Panc1 (cell line): ENCODE measurements at regions of chr2 and their contacts with region 1.

Region 1: GRCh38 chr2:189287982-189288521 is 108.5 kb upstream of the COL5A2 start:
- DNase-seq: peak; percentile 75
- ATAC-seq: peak; percentile 91
- H3K4me3 ChIP-seq: no peak overlapping the region
- H3K27ac ChIP-seq: peak overlapping the region; percentile 13
- H3K4me1 ChIP-seq: peaks cover 12% of the 10 kb centered on the region
- H3K27me3 ChIP-seq: no peaks in the 10 kb centered on the region
- CTCF ChIP-seq: peak; percentile 61; the same call in 1 of the 2 replicates

Region 2: DNA sequence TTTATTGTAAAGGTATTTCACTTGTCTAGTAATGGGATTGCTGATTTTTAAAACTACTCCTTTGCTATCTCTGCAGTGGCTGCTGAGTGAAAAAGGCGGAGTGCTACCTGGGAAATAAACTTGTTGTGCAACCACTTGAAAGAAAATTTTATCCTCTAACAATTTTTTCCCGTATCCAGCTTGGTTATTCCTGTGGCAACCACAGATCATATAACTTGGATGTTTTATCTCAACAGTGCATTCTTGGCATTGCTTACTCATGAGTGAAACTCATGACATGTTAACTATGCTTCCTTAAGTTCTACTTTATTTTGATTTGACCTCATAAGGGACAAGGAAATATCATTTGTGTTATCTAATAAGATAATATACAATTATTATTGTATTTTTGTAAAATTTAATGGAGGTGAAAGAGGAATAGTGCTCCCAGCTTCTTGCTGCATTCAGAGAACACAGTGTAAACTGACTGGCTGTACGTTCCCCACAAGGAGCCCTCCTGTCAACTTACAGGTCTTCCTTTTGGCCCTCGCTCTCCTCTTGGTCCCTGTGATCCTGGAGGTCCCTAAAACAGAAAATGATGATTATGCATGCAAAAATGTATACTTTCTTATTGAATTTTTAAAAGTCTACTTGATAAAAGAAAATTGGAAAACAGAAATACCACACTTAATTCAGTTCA is 191.1 kb before region 1 on chr2:
- CTCF ChIA-PET with region 1: no interaction called
- POLR2A ChIA-PET with region 1: no interaction called
- in situ Hi-C with region 1: no loop called
- intact Hi-C with region 1: loop called (anchors 2 kb)
- DNase-seq: peak; percentile 22
- ATAC-seq: peak; percentile 87
- H3K4me3 ChIP-seq: no peak overlapping the region
- H3K27ac ChIP-seq: peak overlapping the region; percentile 66
- H3K4me1 ChIP-seq: peaks cover 19% of the 10 kb centered on the region; the same call in 1 of the 2 replicates
- H3K27me3 ChIP-seq: no peaks in the 10 kb centered on the region
- CTCF ChIP-seq: no peak

Region 3: DNA sequence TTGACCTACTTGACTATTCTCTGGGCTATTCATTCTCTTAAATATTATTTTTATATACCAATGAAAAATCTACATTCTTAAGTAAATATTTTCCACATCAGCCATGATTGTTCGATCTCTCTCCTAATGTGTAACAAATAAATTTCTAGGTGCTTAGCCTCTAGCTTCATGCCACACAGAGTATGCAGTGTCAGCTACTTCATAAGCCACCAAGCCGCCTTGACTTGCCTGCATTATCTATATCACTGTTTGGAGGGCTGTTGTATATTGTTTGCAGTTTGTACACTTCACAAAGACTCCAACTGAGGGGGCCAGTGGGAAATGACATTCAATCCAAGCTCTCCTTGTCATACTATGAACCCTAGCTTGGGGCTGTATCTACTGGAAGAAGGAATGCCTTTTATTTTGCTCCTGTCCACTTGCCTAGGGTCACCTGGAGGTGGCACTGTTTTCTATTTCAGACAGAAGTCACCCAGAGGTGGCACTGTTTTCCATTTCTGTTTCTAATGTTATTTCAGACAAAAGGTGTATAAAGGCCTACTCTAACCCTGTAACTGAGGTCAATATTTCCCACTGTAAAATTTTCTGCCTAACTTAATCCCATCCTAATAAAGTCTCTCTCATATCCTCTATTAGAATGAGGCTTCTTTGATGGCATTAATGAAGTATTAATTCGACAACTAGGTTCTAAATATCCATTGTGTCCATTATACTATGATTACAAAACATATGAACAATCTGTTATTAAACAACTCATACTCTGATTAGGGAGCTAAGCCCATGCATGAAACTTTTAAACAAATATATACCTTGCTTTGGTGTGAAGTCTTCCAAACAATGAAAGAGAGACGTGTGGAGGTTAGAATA is 144.9 kb before region 1 on chr2:
- CTCF ChIA-PET with region 1: interaction called, 4 read pairs
- POLR2A ChIA-PET with region 1: no interaction called
- in situ Hi-C with region 1: no loop called
- intact Hi-C with region 1: loop called (anchors 1 kb)
- DNase-seq: peak; percentile 58
- ATAC-seq: peak; percentile 88
- H3K4me3 ChIP-seq: no peak overlapping the region
- H3K27ac ChIP-seq: peak overlapping the region; percentile 79
- H3K4me1 ChIP-seq: peaks cover 32% of the 10 kb centered on the region
- H3K27me3 ChIP-seq: no peaks in the 10 kb centered on the region
- CTCF ChIP-seq: peak; percentile 87

Region 4: DNA sequence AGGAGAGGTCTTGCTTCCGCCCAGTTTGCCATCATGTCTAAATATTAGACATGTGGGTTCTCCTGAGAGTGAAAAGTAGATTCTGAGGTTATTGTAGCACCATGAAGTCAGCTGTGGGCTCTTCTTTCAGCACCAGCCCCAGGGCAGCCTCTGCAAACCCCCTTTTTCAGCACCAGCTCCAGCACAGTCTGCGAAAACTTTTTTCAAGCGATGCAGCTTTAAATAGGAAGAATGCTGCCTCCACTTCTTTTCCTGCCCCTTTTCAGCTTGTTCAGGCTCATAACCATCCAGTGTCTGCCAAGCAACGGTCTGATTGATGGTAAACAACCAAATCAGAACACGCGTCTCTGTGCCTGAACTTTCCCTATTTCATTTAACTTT is 108.5 kb before region 1 on chr2 and contains the start of gene COL5A2:
- CTCF ChIA-PET with region 1: interaction called, 4 read pairs
- POLR2A ChIA-PET with region 1: no interaction called
- in situ Hi-C with region 1: no loop called
- intact Hi-C with region 1: loop called (anchors 1 kb)
- DNase-seq: no peak
- ATAC-seq: peak; percentile 91
- H3K4me3 ChIP-seq: peak within 1 kb of the TSS; percentile 64 to 95
- H3K27ac ChIP-seq: peak within 1 kb of the TSS; percentile 84
- H3K4me1 ChIP-seq: peaks cover 18% of the 10 kb centered on the region
- H3K27me3 ChIP-seq: no peaks in the 10 kb centered on the region
- CTCF ChIP-seq: no peak
- total RNA-seq, gene COL5A2: 144 TPM

Region 5: DNA sequence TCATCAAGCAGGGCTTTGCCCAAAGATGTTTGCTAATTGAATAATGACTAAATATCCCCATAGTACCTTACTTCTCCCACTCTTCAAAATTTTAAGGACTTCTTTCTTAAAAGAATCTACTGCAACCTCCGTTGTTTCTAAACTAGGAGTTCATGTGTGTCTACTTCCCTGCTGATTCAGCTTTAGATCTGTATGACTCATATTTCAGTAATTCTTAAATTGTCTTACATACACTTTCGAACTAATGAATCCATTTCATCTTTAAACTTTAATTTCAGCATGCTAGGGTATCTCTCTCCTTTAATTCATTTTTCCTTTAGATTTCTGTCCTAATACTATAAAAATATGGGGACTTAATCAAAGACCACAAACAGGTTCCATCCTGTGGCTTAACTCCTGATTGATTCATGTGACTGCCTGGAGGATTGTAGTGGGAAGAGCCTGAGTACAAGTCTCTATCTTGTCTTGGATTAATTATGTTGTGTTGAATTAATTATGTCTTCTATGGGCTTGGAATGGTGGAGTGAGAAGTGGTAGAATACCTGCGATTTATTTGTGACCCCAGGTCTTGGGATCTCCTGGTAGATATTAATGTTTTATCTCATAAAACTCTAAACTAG is 83.6 kb before region 1 on chr2:
- CTCF ChIA-PET with region 1: no interaction called
- POLR2A ChIA-PET with region 1: interaction called, 5 read pairs
- in situ Hi-C with region 1: no loop called
- intact Hi-C with region 1: loop called (anchors 10 kb)
- DNase-seq: peak; percentile 68
- ATAC-seq: peak; percentile 72
- H3K4me3 ChIP-seq: peak overlapping the region; percentile 37 to 55
- H3K27ac ChIP-seq: peak overlapping the region; percentile 92
- H3K4me1 ChIP-seq: peaks cover 31% of the 10 kb centered on the region
- H3K27me3 ChIP-seq: no peaks in the 10 kb centered on the region
- CTCF ChIP-seq: no peak

Region 6: DNA sequence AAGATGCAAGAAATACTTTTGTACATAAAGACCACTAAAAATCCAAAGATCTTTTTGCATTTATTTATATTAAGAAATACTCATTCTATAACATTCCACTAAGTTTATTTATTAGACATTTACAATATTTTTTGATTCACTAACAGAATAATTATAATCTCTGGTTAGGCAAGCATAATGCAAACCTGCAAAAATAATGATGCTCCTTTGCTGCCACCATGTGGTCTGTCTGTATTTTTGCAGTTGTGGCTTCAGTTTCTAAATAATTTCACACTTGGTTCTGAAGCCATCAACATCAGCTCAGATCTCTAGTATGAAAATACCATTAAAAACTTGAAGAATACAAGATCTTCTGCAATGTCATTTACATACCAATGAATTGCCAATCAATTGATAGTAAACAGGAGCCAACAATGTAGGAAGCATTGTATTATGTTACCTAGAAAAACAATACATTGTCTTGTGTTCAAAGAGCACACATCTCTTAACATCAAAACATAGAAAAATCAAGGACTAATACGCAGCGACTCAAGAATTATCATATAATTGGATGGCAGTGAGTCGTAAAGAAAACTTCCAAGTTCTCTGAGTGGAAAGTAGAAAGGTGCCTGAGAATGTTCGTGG is 124.4 kb after region 1 on chr2:
- CTCF ChIA-PET with region 1: no interaction called
- POLR2A ChIA-PET with region 1: interaction called, 6 read pairs
- in situ Hi-C with region 1: no loop called
- intact Hi-C with region 1: loop called (anchors 5 kb)
- DNase-seq: no peak
- ATAC-seq: peak; percentile 74
- H3K4me3 ChIP-seq: no peak overlapping the region
- H3K27ac ChIP-seq: peak overlapping the region; percentile 72
- H3K4me1 ChIP-seq: peaks cover 14% of the 10 kb centered on the region; the same call in 1 of the 2 replicates
- H3K27me3 ChIP-seq: no peaks in the 10 kb centered on the region
- CTCF ChIP-seq: peak; percentile 65; the same call in 1 of the 2 replicates

Region 7: GRCh38 chr2:189454009-189454408 is 166.0 kb after region 1 on chr2:
- CTCF ChIA-PET with region 1: no interaction called
- POLR2A ChIA-PET with region 1: no interaction called
- in situ Hi-C with region 1: no loop called
- intact Hi-C with region 1: no loop called
- DNase-seq: no peak
- ATAC-seq: no peak
- H3K4me3 ChIP-seq: no peak overlapping the region
- H3K27ac ChIP-seq: no peak overlapping the region
- H3K4me1 ChIP-seq: no peaks in the 10 kb centered on the region
- H3K27me3 ChIP-seq: no peaks in the 10 kb centered on the region
- CTCF ChIP-seq: no peak